PC-3 (cell line): ENCODE measurements at regions of chr10 and their contacts with region 1.

Region 1: GRCh38 chr10:62224606-62225005 is 44.0 kb downstream of the RTKN2 start:
- DNase-seq: peak; percentile 90
- ATAC-seq: peak; percentile 88
- H3K4me3 ChIP-seq: no peak overlapping the region
- H3K27ac ChIP-seq: no peak overlapping the region
- H3K4me1 ChIP-seq: peaks cover 12% of the 10 kb centered on the region
- H3K27me3 ChIP-seq: no peaks in the 10 kb centered on the region
- CTCF ChIP-seq: no peak

Region 2: GRCh38 chr10:62082729-62083411 is 141.7 kb before region 1 on chr10:
- CTCF ChIA-PET with region 1: no interaction called
- POLR2A ChIA-PET with region 1: no interaction called
- intact Hi-C with region 1: no loop called
- DNase-seq: peak; percentile 69
- ATAC-seq: peak; percentile 58
- H3K4me3 ChIP-seq: peak overlapping the region; percentile 24
- H3K27ac ChIP-seq: peak overlapping the region; percentile 54
- H3K4me1 ChIP-seq: peaks cover 53% of the 10 kb centered on the region
- H3K27me3 ChIP-seq: no peaks in the 10 kb centered on the region
- CTCF ChIP-seq: no peak

Region 3: GRCh38 chr10:62244780-62245467 is 20.3 kb after region 1 on chr10:
- CTCF ChIA-PET with region 1: no interaction called
- POLR2A ChIA-PET with region 1: no interaction called
- intact Hi-C with region 1: no loop called
- DNase-seq: peak; percentile 99
- ATAC-seq: peak; percentile 42
- H3K4me3 ChIP-seq: no peak overlapping the region
- H3K27ac ChIP-seq: peak overlapping the region; percentile 3
- H3K4me1 ChIP-seq: peaks cover 60% of the 10 kb centered on the region
- H3K27me3 ChIP-seq: no peaks in the 10 kb centered on the region
- CTCF ChIP-seq: peak; percentile 100

Region 4: GRCh38 chr10:62335326-62335725 is 110.7 kb after region 1 on chr10:
- CTCF ChIA-PET with region 1: no interaction called
- POLR2A ChIA-PET with region 1: no interaction called
- intact Hi-C with region 1: loop called (anchors 1 kb)
- DNase-seq: peak; percentile 69
- ATAC-seq: peak; percentile 94
- H3K4me3 ChIP-seq: no peak overlapping the region
- H3K27ac ChIP-seq: no peak overlapping the region
- H3K4me1 ChIP-seq: peaks cover 8% of the 10 kb centered on the region
- H3K27me3 ChIP-seq: no peaks in the 10 kb centered on the region
- CTCF ChIP-seq: no peak